ENCODE measurements at regions of chr10 and their contacts with region 1.

Region 1: DNA sequence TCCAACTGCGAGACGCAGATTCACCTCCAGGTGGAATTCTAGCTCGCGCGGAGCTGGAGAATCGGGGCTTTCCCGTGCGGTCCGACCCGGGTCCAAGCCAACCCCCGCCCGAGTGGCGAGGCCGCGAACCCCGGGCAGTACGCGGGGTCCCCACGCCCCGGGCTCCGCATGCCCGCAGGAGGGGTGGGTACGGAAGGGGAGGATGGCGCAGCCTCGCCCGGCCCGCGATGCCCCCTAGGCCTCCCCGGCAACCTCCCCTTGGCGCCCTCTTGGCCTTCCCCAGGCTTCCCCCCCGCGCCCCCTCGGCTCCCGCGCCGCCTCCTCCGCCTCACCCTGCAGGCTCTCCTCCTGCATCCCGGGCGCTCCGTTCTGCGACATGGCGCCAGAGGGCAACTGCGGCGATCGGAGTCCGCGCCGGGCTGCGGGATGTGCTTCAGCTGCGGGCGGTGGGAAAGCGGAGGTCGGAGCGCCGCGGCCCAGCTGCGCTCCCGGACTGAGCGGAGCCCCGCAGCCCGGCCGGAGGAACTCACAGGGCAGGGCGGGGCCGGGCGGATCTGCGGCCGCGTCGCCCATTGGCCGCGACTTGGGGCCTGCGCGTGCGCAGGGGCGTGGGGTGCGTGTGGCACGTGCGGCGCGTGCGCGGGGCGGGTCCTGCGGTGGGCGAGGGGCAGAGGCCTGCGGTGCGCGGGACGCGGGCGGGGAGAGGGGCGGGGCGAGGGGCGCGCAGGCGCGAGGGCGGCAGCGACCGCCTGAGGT is at the start of gene BNIP3:
- DNase-seq: peak; percentile 95 to 99
- ATAC-seq: peak; percentile 94
- H3K4me3 ChIP-seq: peak within 1 kb of the TSS; percentile 40 to 97
- H3K27ac ChIP-seq: no peak within 1 kb of the TSS
- H3K4me1 ChIP-seq: no peaks in the 10 kb centered on the region
- H3K27me3 ChIP-seq: no peaks in the 10 kb centered on the region
- total RNA-seq, gene BNIP3: 29.4 to 32.7 TPM

Region 2: DNA sequence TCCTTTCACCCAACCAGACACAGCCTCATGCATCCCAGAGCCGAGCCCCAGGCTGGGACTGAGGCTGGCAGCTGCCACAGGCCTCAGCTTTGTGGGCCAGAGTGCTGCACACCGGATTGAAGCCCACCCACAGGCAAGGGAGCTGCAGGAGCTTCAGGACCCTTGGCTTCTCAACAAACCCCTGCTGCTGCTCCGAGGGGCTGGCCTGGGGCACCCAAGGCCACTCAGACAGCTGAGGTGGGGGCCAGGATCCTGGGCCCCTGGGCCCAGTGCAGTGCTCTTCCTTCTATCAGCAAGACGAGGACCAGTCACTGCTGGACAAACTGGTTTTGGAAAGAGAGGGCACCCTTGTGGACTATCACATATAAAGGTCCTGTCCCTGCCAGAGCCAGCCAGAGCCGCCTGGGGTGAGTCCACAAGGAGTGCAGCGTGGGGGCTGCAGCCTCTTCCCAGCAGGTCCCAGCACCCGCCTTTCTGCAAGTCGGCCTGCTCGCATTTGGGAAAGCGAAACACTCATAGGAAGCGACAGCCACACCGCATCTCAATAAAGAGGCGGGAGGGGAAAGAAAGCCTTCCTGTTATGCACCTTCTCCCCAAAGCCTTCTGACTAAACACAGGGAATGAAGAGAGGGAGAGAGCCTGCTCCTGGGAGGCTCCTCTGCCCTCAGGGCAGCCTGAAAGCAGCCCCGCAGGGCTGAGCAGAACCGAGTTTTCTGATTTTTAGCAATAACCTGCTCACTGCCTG is 660.6 kb before region 1 on chr10:
- intact Hi-C with region 1: no loop called
- DNase-seq: no peak
- ATAC-seq: no peak
- H3K4me3 ChIP-seq: no peak overlapping the region
- H3K27ac ChIP-seq: no peak overlapping the region
- H3K4me1 ChIP-seq: no peaks in the 10 kb centered on the region
- H3K27me3 ChIP-seq: no peaks in the 10 kb centered on the region

Region 3: DNA sequence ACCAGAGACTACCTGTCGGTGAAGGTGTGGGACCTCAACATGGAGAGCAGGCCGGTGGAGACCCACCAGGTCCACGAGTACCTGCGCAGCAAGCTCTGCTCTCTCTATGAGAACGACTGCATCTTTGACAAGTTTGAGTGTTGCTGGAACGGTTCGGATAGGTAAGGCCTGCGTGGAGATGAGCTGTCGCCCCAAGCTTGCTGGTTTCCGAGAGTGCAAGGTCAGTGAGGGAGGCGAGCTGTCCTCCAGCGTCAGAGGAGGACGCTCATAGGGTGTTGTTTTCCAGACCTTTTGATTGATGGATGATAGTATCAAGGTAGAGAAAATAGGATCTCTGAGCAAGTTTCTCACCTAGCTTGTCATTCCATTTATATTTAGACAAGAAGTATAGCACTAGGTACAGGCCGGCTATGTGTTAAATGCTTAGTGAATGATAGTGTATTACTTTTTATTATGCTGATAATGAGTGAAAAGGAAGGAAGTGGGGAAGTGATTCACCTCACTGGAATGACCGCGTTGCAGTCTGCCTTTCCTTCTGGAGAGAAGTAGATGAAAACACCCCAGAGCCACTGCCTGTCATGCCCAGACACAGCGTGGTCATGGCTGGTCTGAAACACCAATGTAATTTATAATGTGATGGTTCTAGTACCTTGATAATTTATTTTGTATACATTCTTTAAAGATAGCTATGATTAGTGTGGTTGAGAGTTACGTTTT is 33.8 kb before region 1 on chr10:
- intact Hi-C with region 1: loop called in 1 of 2 experiments (anchors 5 kb)
- DNase-seq: peak in 1 of 2 donors; percentile 45
- ATAC-seq: no peak
- H3K4me3 ChIP-seq: no peak overlapping the region
- H3K27ac ChIP-seq: no peak overlapping the region
- H3K4me1 ChIP-seq: peaks cover 0 to 5% of the 10 kb centered on the region in 2 donors
- H3K27me3 ChIP-seq: no peaks in the 10 kb centered on the region

Region 4: GRCh38 chr10:132011024-132011423 is 29.4 kb after region 1 on chr10:
- intact Hi-C with region 1: no loop called
- DNase-seq: no peak
- ATAC-seq: no peak
- H3K4me3 ChIP-seq: no peak overlapping the region
- H3K27ac ChIP-seq: no peak overlapping the region
- H3K4me1 ChIP-seq: no peaks in the 10 kb centered on the region
- H3K27me3 ChIP-seq: no peaks in the 10 kb centered on the region

Region 5: GRCh38 chr10:133022776-133023100 is 1041.1 kb after region 1 on chr10:
- intact Hi-C with region 1: no loop called
- DNase-seq: peak in 1 of 2 donors; percentile 50
- ATAC-seq: no peak
- H3K4me3 ChIP-seq: no peak overlapping the region
- H3K27ac ChIP-seq: no peak overlapping the region
- H3K4me1 ChIP-seq: no peaks in the 10 kb centered on the region
- H3K27me3 ChIP-seq: no peaks in the 10 kb centered on the region